Common myeloid progenitor, CD34-positive (primary cell): ENCODE measurements at regions of chr3 and their contacts with region 1.

Region 1: DNA sequence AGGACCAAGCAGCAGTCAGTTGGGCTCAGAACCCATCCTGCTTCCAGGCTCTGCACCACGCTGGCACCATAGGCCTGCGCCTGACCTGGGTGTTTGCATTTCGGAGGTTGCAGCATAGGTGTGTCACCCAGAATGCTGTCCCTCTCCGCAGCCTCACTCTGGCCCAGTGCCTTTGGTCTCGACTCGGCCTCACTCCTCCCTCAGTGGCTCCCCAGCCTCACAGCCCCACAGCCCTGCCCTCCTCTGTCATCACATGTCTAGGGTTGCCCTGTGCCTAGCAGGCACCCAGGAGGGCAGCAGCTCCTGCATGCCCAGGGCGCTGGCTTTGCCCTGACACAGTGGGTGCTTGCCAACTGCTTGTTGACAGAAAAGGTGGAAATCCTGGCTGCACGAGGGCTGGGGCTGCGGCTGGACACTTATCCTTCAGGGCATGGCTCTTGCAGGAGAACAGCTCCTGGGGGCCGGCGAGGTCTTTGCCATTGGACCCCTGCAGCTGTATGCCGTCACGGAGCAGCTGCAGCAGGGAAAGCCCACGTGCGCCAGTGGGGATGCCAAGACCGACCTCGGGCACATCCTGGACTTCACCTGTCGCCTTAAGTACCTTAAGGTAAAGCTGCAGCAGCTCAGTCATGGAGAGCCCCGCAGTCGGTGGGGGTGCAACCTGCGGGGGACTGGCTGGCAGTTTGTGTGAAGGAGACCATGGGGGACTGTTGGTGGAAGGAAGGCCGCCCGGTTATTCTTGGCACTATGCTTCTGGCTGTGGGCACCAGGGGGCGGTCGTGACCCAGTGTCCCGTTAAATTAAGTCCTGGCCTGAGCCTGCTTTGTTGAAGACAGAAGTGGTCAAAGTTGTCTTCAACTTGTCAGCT is 16.2 kb downstream of the NISCH start:
- DNase-seq: peak; percentile 51 to 73 (median 61)
- H3K4me3 ChIP-seq: no peak overlapping the region
- H3K27ac ChIP-seq: no peak overlapping the region
- H3K4me1 ChIP-seq: peaks cover 0 to 14% (median 0%) of the 10 kb centered on the region in 4 experiments
- H3K27me3 ChIP-seq: no peaks in the 10 kb centered on the region

Region 2: DNA sequence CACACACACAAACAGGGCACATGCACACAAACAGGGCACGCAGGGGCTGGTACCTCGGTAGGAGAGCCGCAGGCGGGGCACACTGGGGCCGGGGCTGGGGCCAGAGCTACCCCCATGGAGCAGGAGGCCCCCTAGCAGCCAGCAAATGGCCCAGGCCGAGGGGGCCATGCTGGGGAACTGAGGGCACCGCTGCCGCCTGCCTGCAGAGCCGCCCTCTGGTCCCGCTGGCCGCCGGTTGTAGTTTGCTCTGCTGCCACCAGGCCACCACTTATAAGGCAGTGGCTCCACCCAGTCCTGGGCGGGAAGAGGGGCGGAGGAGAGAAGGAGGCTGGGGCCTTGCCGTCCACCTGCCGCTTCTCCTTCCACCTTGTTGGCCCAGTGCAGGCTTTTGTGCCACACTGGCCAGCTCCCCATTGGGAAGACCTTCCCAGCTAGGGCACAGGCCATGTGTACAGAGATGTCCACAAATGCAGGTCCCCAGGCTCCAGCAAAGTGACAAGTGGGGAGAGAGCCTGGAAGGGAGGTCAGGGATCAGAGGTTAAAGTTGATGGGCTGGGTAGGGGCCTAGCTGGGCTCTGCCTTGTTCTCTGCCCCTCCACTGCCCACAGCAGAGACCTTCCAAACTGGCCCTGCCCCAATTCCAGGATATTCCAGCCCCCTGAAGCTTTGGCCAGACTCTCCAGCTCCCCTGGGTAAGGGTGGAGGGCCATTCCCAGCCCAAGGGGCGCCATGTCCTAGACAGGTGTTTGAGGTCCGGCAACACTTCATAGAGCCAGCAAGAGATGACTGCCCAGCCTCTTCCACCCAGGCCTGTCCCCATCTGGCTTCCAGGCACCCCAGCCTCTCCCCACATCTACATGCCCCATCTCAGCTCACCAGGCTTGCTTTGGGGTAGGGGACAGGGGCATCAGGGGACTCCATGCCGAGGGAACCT is 26.5 kb before region 1 on chr3 and contains the start of gene SEMA3G:
- CTCF ChIA-PET with region 1: interaction called, 45 read pairs
- POLR2A ChIA-PET with region 1: no interaction called
- DNase-seq: peak; percentile 74 to 86 (median 85)
- H3K4me3 ChIP-seq: peak within 1 kb of the TSS in 2 of 7 experiments; percentile 26 to 42
- H3K27ac ChIP-seq: no peak within 1 kb of the TSS
- H3K4me1 ChIP-seq: peaks cover 0 to 11% (median 6%) of the 10 kb centered on the region in 4 experiments
- H3K27me3 ChIP-seq: no peaks in the 10 kb centered on the region

Region 3: GRCh38 chr3:52481819-52482521 is 10.4 kb after region 1 on chr3:
- CTCF ChIA-PET with region 1: interaction called, 14 read pairs
- POLR2A ChIA-PET with region 1: no interaction called
- DNase-seq: peak in 1 of 3 donors; percentile 15
- H3K4me3 ChIP-seq: no peak overlapping the region
- H3K27ac ChIP-seq: no peak overlapping the region
- H3K4me1 ChIP-seq: peaks cover 0 to 10% (median 0%) of the 10 kb centered on the region in 4 experiments
- H3K27me3 ChIP-seq: no peaks in the 10 kb centered on the region

Region 4: DNA sequence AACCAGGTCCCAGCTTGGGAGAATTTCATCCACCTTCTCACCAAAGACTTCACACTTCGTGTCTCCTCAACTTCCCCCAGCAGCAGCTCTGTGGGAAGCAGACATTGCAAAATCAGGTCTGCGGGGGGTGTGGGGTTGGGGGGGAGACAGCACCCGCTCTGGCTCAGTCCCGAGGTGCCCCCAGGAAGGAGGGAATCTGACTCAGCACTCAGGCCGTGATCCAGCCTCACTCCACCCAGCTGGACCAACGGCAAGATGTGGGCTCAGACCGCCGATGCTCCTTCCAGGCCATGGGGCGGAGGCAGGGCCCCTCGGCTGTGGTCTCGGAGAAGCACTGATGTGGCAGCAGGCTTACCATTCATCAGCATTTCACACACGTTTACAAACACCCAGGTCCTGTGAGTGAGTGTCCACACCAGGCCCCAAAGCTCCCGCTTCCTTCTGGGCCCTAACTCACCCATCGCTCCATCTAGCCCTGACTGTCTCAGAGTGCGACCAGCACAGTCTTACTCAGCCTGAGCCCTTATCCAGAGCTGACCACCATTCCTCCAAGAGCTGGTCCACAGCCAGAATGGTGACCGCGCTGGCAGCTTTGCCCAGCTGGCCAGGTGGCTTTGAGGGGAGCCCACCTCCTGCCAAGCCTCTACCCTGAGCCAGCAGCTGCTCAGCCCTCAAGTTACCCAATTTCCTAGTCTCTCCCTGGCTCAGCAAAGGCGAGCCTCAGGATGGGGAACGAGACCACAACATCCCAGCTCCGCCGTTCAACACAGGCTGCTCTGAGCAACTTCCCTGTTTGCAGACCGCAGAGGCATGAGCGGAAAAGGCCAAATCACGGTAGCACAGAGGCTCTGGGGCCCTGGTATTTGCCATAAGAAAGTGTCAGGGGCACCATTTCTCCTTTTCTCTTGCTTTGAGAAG is 26.8 kb after region 1 on chr3:
- CTCF ChIA-PET with region 1: interaction called, 43 read pairs
- POLR2A ChIA-PET with region 1: no interaction called
- DNase-seq: peak; percentile 92 to 96 (median 95)
- H3K4me3 ChIP-seq: peak overlapping the region in 4 of 7 experiments; percentile 3 to 74 (median 43)
- H3K27ac ChIP-seq: no peak overlapping the region
- H3K4me1 ChIP-seq: peaks cover 5 to 80% (median 69%) of the 10 kb centered on the region in 4 experiments
- H3K27me3 ChIP-seq: no peaks in the 10 kb centered on the region

Region 5: GRCh38 chr3:52663098-52663497 is 191.5 kb after region 1 on chr3:
- CTCF ChIA-PET with region 1: interaction called, 3 read pairs
- POLR2A ChIA-PET with region 1: interaction called, 14 read pairs
- DNase-seq: no peak
- H3K4me3 ChIP-seq: no peak overlapping the region
- H3K27ac ChIP-seq: no peak overlapping the region
- H3K4me1 ChIP-seq: no peaks in the 10 kb centered on the region
- H3K27me3 ChIP-seq: no peaks in the 10 kb centered on the region

Region 6: DNA sequence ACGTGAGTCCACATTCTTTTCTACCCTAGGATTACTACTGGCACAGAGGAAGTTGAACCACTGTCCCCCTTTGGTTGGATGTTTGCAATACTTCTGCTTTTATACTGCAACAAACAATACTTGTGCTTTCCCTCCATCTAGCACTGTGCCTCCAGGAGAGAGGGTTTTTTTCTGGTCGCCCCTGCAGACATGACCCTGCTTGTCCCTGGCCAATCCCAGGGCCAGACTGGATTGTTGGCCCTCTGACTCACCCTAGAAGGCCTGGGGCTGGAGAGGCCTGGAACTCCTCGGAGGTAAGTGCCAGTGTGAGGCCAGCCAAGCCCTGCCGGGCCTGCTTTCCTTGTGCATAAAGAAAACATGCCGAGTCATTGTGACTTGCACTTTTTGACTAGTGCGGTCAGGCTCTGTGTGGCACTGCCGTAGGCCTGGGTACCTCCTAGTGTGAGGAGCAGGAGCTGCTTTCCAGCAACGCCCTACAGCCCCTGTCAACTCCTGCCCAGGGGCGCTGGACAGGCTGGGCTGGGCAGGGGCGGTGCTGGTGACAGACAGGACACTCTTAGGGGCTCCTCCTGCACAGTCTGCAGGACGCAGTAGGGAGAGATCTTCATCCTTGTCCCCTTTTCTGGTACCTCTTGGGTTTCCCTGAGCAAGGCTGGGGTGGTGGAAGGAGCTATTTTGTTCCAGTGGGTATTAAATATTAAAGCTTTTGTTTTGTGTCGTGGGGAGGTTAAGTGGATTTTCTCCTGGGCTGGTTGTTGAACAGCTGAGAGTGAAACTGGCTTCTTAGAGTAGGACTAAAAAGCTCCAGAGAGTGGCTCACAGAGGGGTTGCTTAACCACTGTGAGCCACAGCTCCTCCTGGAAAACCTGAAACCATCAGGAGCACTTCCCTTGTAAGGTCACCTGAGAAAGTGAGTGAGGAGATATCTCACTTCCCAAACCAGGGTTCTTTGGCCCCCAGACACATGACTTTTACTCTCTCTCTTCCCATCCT is 798.6 kb after region 1 on chr3:
- CTCF ChIA-PET with region 1: no interaction called
- POLR2A ChIA-PET with region 1: no interaction called
- DNase-seq: peak; percentile 98 to 99 (median 99)
- H3K4me3 ChIP-seq: peak overlapping the region in 5 of 7 experiments; percentile 8 to 55 (median 15)
- H3K27ac ChIP-seq: peak overlapping the region; percentile 59 to 82
- H3K4me1 ChIP-seq: peaks cover 10 to 55% (median 27%) of the 10 kb centered on the region in 4 experiments
- H3K27me3 ChIP-seq: no peaks in the 10 kb centered on the region